Activated naive CD4-positive, alpha-beta T cell treated with anti-CD3 and anti-CD28 coated beads for 36 hours (primary cell): ENCODE measurements at regions of chrX and their contacts with region 1.

Region 1: GRCh38 chrX:40729598-40730584 is 5.5 kb downstream of the MED14 start:
- DNase-seq: no peak
- H3K4me3 Mint-ChIP-seq: peak overlapping the region; percentile 0
- H3K27ac Mint-ChIP-seq: no peak overlapping the region
- H3K4me1 Mint-ChIP-seq: peaks cover 49% of the 10 kb centered on the region
- H3K27me3 Mint-ChIP-seq: no peaks in the 10 kb centered on the region

Region 2: GRCh38 chrX:40685362-40685918 is 44.5 kb before region 1 on chrX:
- CTCF ChIA-PET with region 1: no interaction called
- intact Hi-C with region 1: loop called (anchors 5 kb)
- DNase-seq: peak; percentile 4
- H3K4me3 Mint-ChIP-seq: no peak overlapping the region
- H3K27ac Mint-ChIP-seq: no peak overlapping the region
- H3K4me1 Mint-ChIP-seq: peaks cover 23% of the 10 kb centered on the region
- H3K27me3 Mint-ChIP-seq: no peaks in the 10 kb centered on the region